ENCODE measurements at regions of chr7 and their contacts with region 1.

Region 1: DNA sequence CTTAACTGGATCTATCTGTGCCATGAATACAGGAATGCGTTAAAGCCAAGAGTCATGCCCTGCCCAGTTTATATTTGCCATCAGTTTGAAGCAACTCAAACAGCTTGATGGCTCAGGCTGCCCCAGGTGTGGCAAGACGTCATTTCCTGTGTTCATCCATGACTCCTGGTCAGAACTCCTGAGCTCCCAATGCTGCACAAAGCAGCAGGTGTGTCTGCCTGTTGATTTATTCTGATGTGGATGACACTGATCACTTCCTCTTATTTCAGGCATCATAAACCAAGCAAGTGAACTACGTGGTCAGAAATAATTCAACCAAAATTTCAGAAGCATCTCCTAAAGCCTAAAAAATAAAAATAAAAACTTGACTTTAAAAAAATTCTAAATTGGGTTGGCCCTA is 68.5 kb downstream of the EZH2 start:
- DNase-seq: no peak
- ATAC-seq: no peak
- H3K4me3 ChIP-seq: no peak overlapping the region
- H3K4me3 Mint-ChIP-seq: no peak overlapping the region
- H3K27ac ChIP-seq: no peak overlapping the region
- H3K27ac Mint-ChIP-seq: no peak overlapping the region
- H3K4me1 ChIP-seq: no peaks in the 10 kb centered on the region
- H3K4me1 Mint-ChIP-seq: no peaks in the 10 kb centered on the region
- H3K27me3 ChIP-seq: no peaks in the 10 kb centered on the region
- H3K27me3 Mint-ChIP-seq: no peaks in the 10 kb centered on the region
- CTCF ChIP-seq: no peak

Region 2: DNA sequence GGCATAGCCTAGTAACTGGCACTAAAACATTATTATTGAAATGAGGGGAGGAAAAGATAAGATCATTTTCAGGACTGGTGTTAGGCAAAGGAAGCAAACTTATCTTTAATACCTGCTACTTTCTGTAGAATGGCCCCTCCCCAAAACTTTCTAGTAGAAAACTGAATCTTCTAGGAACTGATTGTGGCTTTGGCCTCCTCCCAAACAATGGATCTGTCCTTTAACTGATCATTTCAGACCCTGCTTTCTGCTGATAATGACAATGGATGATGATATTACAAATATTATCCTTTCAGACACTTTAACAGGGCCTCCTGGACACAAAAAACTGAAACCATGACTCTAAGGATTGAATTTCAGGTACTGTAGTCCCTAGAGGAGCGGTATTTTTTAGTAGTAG is 13.4 kb after region 1 on chr7:
- CTCF ChIA-PET with region 1: interaction called, 3 read pairs
- POLR2A ChIA-PET with region 1: no interaction called
- intact Hi-C with region 1: loop called in 1 of 2 experiments (anchors 2 kb)
- DNase-seq: no peak
- ATAC-seq: no peak
- H3K4me3 ChIP-seq: no peak overlapping the region
- H3K4me3 Mint-ChIP-seq: no peak overlapping the region
- H3K27ac ChIP-seq: no peak overlapping the region
- H3K27ac Mint-ChIP-seq: no peak overlapping the region
- H3K4me1 ChIP-seq: no peaks in the 10 kb centered on the region
- H3K4me1 Mint-ChIP-seq: no peaks in the 10 kb centered on the region
- H3K27me3 ChIP-seq: no peaks in the 10 kb centered on the region
- H3K27me3 Mint-ChIP-seq: no peaks in the 10 kb centered on the region
- CTCF ChIP-seq: no peak

Region 3: GRCh38 chr7:148849393-148850098 is 33.9 kb after region 1 on chr7:
- CTCF ChIA-PET with region 1: no interaction called
- POLR2A ChIA-PET with region 1: no interaction called
- intact Hi-C with region 1: no loop called
- DNase-seq: no peak
- ATAC-seq: no peak
- H3K4me3 ChIP-seq: no peak overlapping the region
- H3K4me3 Mint-ChIP-seq: no peak overlapping the region
- H3K27ac ChIP-seq: no peak overlapping the region
- H3K27ac Mint-ChIP-seq: no peak overlapping the region
- H3K4me1 ChIP-seq: peaks cover 9% of the 10 kb centered on the region
- H3K4me1 Mint-ChIP-seq: peaks cover 44% of the 10 kb centered on the region
- H3K27me3 ChIP-seq: no peaks in the 10 kb centered on the region
- H3K27me3 Mint-ChIP-seq: no peaks in the 10 kb centered on the region
- CTCF ChIP-seq: no peak